ENCODE measurements at regions of chr7 and their contacts with region 1.

Region 1: DNA sequence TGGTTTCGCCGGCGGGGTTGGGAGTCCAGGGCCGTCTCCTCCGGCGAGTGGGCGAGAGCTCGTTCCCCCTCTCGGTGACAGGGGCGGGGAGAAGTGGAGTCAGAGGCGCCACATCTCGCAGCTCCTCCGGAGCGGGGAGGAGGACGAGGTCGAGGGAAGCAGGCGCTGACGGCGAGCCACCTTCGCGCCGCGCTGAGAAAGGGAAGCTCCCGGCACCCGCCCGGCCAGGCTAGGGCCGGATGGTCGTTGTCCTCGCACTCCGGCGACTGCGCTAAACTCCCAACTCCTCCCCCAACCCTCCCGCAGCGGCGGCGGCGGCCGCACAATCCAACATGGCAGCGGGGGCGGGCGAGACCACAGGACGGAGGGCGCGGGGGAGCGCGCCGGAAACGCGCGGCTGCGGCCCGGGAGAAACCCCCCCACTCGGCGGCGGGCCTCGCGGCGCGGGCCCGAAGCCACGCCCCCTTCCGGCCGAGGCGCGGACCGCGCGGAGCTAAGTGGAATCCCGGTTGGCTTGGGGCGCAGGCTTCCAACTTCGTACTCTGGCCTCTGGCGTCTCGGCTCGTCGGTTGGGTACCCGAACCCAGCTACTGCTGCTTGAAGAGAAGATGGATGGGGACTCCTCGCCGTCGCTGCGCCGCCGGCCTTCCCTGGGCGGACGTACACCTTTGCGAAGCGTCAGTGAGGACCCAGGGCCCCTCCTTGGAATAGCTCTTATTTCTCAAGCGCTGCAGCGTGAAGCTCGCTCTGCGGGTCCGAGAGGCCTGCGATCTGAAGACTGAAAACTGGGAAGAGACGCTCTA is at the start of gene WASL:
- DNase-seq: peak; percentile 66 to 95
- H3K4me3 ChIP-seq: peak within 1 kb of the TSS; percentile 89
- H3K27ac ChIP-seq: peak within 1 kb of the TSS; percentile 93
- H3K4me1 ChIP-seq: peaks cover 40% of the 10 kb centered on the region
- H3K27me3 ChIP-seq: no peaks in the 10 kb centered on the region
- CTCF ChIP-seq: peak; percentile 40
- total RNA-seq, gene WASL: 31.4 and 40.3 TPM in 2 replicates

Region 2: DNA sequence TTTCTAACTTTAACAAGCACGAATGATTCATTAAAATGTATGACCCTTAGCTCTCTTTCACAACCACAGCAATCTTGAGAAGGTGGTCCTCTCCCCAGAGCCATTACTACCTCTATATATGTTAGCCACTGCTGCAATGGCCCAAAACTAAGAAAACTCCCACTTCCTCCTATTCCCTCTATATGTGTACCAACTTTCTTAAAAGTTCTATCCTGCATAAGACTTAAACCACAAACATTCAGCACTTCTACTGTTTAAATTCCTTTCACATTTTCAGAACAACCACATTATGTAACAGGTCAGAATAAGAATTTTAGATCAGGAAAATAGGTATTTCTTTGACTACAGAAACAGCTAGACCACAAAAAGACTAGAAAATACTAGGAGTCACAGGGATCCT is 36.3 kb before region 1 on chr7:
- CTCF ChIA-PET with region 1: no interaction called
- POLR2A ChIA-PET with region 1: interaction called, 4 read pairs
- intact Hi-C with region 1: loop called (anchors 5 kb)
- DNase-seq: peak in 1 of 2 experiments; percentile 52
- H3K4me3 ChIP-seq: no peak overlapping the region
- H3K27ac ChIP-seq: peak overlapping the region; percentile 29; the same call in 1 of the 2 replicates
- H3K4me1 ChIP-seq: peaks cover 26% of the 10 kb centered on the region
- H3K27me3 ChIP-seq: no peaks in the 10 kb centered on the region
- CTCF ChIP-seq: no peak

Region 3: DNA sequence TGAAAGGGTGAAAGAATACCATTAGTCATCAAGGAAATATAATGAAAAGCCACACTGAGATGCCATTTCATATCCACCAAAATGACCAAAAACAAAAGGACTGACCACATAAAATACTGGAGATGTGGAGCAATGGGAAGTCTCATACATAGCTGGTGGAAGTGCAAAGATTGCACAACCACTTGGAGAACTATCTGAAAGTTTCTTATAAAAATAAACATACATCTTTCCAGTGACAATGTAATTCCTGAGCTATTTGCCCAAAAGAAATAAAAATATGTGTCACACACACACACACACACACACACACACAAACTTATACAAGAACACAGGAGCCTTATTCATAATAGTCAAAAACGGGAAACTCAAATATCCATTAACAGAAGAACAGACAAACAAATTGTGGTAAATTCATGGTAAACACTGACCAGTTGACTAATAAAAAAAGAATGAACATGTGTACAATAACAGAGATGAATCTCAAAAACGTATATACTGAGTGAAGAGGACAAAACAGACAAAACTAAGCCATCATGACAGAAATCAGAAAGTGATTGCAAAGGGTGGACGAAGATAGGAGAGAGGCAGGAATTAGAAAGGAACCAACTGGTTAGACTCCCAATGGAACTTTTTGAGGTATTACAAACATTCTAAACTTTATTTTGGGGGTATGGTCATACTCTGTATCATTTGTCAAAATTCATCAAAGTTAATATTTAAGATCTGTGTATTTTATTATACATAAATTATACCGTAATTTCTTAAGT is 21.7 kb before region 1 on chr7:
- CTCF ChIA-PET with region 1: interaction called, 3 read pairs
- POLR2A ChIA-PET with region 1: no interaction called
- intact Hi-C with region 1: loop called (anchors 1 kb)
- DNase-seq: peak; percentile 24 to 86
- H3K4me3 ChIP-seq: no peak overlapping the region
- H3K27ac ChIP-seq: peak overlapping the region; percentile 52
- H3K4me1 ChIP-seq: peaks cover 30% of the 10 kb centered on the region
- H3K27me3 ChIP-seq: no peaks in the 10 kb centered on the region
- CTCF ChIP-seq: no peak

Region 4: GRCh38 chr7:123770378-123770777 is 21.4 kb after region 1 on chr7:
- CTCF ChIA-PET with region 1: interaction called, 5 read pairs
- POLR2A ChIA-PET with region 1: interaction called, 18 read pairs
- intact Hi-C with region 1: no loop called
- DNase-seq: peak; percentile 38 to 81
- H3K4me3 ChIP-seq: 0 out of 2 replicates have a peak overlapping the region, but pooled peaks have one; percentile 3
- H3K27ac ChIP-seq: peak overlapping the region; percentile 61
- H3K4me1 ChIP-seq: peaks cover 27% of the 10 kb centered on the region
- H3K27me3 ChIP-seq: no peaks in the 10 kb centered on the region
- CTCF ChIP-seq: no peak

Measured in PC-9 (cell line).